ENCODE measurements at regions of chr17 and their contacts with region 1.

Region 1: GRCh38 chr17:1628856-1629646 is 417 bp upstream of the SLC43A2 start:
- DNase-seq: peak; percentile 96
- CTCF ChIP-seq: peak; percentile 19

Region 2: GRCh38 chr17:1566545-1567199 is 62.4 kb before region 1 on chr17:
- CTCF ChIA-PET with region 1: interaction called, 18 read pairs
- POLR2A ChIA-PET with region 1: no interaction called
- DNase-seq: peak; percentile 74
- CTCF ChIP-seq: no peak

Region 3: DNA sequence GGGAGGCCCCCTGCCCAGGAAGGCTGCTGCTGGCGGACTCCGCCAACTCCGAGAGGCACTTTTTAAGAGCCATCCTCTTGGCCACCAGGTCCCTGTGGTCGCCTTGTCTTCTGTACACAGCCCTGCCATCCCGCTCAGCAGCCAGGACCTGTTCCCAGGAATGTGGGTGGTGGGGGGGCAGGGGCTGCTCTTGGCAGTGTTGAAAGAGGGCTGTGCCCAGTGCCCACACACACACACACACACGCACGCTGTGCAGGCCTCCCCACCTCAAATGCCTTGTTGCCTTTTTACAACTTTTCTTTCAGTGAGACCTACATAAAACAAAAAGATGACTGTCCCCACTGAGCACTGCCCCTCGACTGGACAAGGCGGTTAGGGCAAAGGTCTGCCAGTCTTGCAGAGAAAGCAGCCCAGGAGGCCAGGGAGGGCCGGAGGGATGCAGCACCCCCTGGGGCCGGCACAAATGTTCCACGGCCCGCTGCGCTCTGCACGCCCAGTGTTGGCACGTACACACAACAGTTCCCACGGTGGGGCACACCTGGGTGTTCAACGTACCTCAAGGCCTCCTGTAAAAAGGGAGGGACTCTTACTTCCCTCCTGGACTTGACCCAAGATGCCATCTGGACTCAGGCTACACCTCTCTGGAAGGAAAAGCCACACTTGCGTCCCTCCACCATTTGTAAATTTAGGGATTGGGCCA is 47.9 kb before region 1 on chr17:
- CTCF ChIA-PET with region 1: interaction called, 21 read pairs
- POLR2A ChIA-PET with region 1: interaction called, 3 read pairs
- DNase-seq: no peak
- CTCF ChIP-seq: no peak

Region 4: DNA sequence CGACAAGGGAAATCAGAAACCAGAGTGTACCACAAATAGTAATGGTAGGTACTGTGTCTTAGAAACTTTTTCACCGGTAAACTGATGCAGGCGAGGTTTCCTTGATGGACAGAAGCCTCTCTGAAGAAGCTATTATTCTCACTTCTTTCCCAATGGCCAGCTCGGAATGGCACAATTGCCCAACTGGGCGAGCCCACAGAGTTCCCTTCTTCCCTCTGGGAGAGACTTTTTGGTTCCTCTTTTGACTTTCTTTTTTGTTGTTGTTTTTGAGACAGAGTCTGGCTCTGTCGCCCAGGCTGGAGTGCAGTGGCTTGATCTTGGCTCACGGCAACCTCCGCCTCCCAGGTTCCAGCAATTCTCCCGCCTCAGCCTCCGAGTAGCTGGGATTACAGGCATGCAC is 17.3 kb before region 1 on chr17:
- CTCF ChIA-PET with region 1: interaction called, 20 read pairs
- POLR2A ChIA-PET with region 1: interaction called, 9 read pairs
- DNase-seq: no peak
- CTCF ChIP-seq: no peak

Region 5: GRCh38 chr17:1648963-1649843 is 20.2 kb after region 1 on chr17:
- CTCF ChIA-PET with region 1: interaction called, 59 read pairs
- POLR2A ChIA-PET with region 1: no interaction called
- DNase-seq: peak; percentile 98
- CTCF ChIP-seq: peak; percentile 100

Region 6: DNA sequence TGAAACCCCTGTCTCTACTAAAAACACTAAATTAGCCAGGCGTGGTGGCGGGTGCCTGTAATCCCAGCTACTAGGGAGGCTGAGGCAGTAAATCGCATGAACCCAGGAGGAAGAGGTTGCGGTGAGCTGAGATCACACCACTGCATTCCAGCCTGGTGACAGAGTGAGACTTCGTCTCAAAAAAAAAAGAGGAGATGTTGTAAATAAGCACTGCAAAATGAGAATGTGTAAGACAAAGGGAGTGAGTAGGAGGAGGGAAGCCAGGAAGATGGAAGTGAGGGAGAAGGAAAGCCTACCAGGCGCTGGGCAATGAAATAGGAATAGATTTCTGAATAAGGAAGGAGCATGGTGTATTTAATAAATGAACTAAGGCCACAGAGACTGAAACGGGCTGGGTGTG is 64.3 kb after region 1 on chr17:
- CTCF ChIA-PET with region 1: no interaction called
- POLR2A ChIA-PET with region 1: no interaction called
- DNase-seq: no peak
- CTCF ChIP-seq: no peak